ENCODE measurements at regions of chr20 and their contacts with region 1.

Region 1: DNA sequence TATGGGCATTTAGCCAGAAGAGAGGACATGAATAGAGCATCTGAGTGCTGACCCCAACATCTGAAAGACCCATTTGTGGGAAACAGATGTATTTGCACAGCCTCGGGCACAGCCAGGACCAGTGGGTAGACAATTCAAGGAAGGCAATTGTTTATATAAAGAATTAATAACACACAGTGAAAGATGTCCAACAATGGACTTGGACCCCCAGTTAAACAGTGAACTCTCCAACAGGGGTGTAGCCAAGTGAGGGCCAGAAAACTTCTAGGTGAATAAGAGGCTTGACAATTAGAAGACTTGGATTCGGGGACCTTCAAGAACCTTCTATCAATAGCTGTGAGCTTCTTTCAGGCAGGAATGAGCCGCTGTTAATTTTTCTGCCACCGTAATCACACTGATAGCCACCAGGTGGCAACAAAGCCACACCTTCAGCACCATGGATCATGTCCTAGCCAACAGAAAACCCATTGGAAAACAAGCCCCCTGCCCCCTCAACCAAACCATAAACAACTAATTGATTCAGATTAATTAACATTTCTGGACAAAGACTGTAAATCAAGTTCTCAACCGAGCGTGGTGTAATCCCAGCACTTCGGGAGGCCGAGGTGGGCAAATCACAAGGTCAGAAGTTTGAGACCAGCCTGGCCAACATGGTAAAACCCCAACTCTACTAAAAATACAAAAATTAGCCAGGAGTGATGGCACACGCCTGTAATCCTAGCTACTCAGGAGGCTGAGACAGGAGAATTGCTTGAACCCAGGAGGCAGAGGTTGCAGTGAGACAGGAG is 8.8 kb upstream of the SRSF6 start:
- DNase-seq: peak; percentile 68
- CTCF ChIP-seq: peak; percentile 85

Region 2: GRCh38 chr20:43243672-43244269 is 205.2 kb before region 1 on chr20:
- in situ Hi-C with region 1: no loop called
- DNase-seq: no peak
- CTCF ChIP-seq: no peak

Region 3: GRCh38 chr20:44092551-44093248 is 643.8 kb after region 1 on chr20:
- in situ Hi-C with region 1: loop called (anchors 10 kb)
- DNase-seq: no peak
- CTCF ChIP-seq: peak; percentile 51

Measured in GM13977 (cell line).